CD4-positive, alpha-beta T cell (primary cell): ENCODE measurements at regions of chr1 and their contacts with region 1.

Region 1: DNA sequence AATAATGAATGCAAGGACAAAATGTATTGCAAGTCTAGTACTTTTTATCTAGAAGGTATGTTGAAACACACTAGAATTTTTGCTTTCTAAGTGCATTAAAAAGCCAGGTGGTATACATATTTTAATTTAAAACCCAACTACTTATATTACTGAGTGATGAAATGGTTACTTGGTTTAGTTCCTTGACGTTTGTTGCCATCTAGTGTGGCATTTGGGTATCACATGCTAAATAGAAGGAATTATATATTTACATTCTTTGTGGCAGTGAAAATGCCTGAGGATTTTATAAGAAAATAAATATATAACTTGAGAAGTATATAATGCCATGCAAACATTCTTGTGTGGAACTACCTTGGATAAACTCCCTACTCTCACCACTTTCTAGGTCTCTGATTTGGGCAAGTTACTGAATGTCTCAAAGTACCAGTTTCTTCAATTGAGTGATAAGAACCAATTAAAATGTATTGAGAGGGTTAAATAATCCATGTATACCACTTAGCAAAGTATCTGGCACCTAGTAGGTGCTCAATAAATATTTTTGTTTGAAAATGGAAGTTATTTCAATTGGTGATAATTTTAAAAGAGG is 69.6 kb downstream of the SDCCAG8 start:
- DNase-seq: peak in 4 of 14 experiments; percentile 43 to 72 (median 62)
- ATAC-seq: peak; percentile 55
- H3K4me3 ChIP-seq: no peak overlapping the region
- H3K4me3 Mint-ChIP-seq: no peak overlapping the region
- H3K27ac ChIP-seq: no peak overlapping the region
- H3K27ac Mint-ChIP-seq: no peak overlapping the region
- H3K4me1 ChIP-seq: no peaks in the 10 kb centered on the region
- H3K4me1 Mint-ChIP-seq: no peaks in the 10 kb centered on the region
- H3K27me3 ChIP-seq: no peaks in the 10 kb centered on the region
- H3K27me3 Mint-ChIP-seq: no peaks in the 10 kb centered on the region
- CTCF ChIP-seq: peak; percentile 88

Region 2: DNA sequence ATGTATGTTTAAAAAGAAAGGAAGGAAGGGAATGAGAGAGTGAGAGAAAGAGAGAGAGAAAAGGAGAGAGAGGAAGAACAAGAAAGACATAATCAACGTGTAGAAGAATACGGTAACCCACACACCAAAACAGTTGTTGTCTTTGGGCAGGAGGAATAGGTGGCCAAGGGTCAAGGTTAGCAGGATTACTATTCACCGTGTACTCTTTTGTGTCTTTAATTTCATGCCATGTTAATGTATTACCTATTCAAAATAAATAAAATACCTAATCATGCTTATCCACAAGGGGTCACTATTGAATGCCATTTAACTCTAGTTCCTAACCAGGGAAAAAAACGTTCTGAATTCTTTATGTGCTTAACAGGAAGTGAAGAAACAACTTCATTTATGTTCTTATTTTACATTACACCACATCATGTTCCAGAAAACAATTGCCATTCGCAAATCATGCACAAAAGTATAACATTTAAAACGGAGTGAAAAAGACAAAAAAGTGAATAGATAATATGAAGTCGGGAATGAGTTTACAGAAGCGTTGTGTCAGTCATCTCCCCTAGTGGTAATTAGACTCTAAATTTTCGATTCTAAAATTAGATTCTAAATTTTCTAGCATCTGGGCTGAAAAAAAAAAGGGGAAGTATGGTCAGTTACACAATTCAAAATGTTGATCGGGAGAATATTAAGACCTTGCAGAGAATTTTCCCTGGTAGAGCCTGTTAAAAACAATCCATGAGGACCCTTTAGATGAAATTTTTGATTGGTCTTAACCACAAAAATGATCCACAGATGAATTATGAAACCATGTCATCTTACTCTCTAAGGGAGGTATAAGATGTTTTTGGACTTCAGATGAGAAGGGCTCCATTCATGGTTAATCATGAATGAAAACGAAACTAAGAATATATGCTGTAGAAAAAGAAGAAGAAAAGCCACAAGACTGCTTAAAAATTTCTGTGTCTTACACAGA is 1793.9 kb before region 1 on chr1:
- CTCF ChIA-PET with region 1: no interaction called
- POLR2A ChIA-PET with region 1: no interaction called
- intact Hi-C with region 1: loop called (anchors 5 to 10 kb)
- DNase-seq: peak in 3 of 14 experiments; percentile 78 to 81 (median 78)
- ATAC-seq: peak; percentile 89
- H3K4me3 ChIP-seq: peak overlapping the region; percentile 59
- H3K4me3 Mint-ChIP-seq: peak overlapping the region; percentile 97
- H3K27ac ChIP-seq: no peak overlapping the region
- H3K27ac Mint-ChIP-seq: peak overlapping the region; percentile 42
- H3K4me1 ChIP-seq: peaks cover 2% of the 10 kb centered on the region
- H3K4me1 Mint-ChIP-seq: peaks cover 6% of the 10 kb centered on the region
- H3K27me3 ChIP-seq: no peaks in the 10 kb centered on the region
- H3K27me3 Mint-ChIP-seq: no peaks in the 10 kb centered on the region
- CTCF ChIP-seq: peak; percentile 74

Region 3: DNA sequence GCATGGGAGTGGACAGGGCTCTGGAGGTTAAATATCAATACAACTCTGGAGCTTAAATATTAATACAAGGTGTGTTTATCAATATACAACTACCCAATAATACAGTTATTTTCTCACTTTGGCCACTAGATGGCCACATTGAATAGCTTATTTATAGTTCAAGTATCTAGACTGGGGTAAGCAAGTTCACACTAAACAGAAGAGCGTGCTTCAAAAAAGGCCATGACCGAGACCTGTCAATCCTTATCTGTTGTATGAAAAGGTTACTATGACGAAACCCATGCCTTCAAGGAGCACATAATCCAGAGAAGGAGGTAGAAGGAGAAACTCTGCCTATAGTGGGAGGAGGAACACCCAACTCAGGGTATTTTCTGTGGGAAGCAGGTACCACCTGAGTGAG is 1714.3 kb before region 1 on chr1:
- CTCF ChIA-PET with region 1: no interaction called
- POLR2A ChIA-PET with region 1: no interaction called
- intact Hi-C with region 1: loop called (anchors 5 kb)
- DNase-seq: peak in 5 of 14 experiments; percentile 5 to 76 (median 68)
- ATAC-seq: peak; percentile 93
- H3K4me3 ChIP-seq: no peak overlapping the region
- H3K4me3 Mint-ChIP-seq: no peak overlapping the region
- H3K27ac ChIP-seq: no peak overlapping the region
- H3K27ac Mint-ChIP-seq: no peak overlapping the region
- H3K4me1 ChIP-seq: no peaks in the 10 kb centered on the region
- H3K4me1 Mint-ChIP-seq: no peaks in the 10 kb centered on the region
- H3K27me3 ChIP-seq: no peaks in the 10 kb centered on the region
- H3K27me3 Mint-ChIP-seq: no peaks in the 10 kb centered on the region
- CTCF ChIP-seq: peak; percentile 85

Region 4: GRCh38 chr1:242017584-242018233 is 1307.7 kb before region 1 on chr1:
- CTCF ChIA-PET with region 1: no interaction called
- POLR2A ChIA-PET with region 1: no interaction called
- intact Hi-C with region 1: loop called (anchors 5 to 10 kb)
- DNase-seq: peak in 9 of 14 experiments; percentile 3 to 57 (median 15)
- ATAC-seq: no peak
- H3K4me3 ChIP-seq: no peak overlapping the region
- H3K4me3 Mint-ChIP-seq: no peak overlapping the region
- H3K27ac ChIP-seq: no peak overlapping the region
- H3K27ac Mint-ChIP-seq: no peak overlapping the region
- H3K4me1 ChIP-seq: no peaks in the 10 kb centered on the region
- H3K4me1 Mint-ChIP-seq: no peaks in the 10 kb centered on the region
- H3K27me3 ChIP-seq: no peaks in the 10 kb centered on the region
- H3K27me3 Mint-ChIP-seq: no peaks in the 10 kb centered on the region
- CTCF ChIP-seq: peak; percentile 60

Region 5: DNA sequence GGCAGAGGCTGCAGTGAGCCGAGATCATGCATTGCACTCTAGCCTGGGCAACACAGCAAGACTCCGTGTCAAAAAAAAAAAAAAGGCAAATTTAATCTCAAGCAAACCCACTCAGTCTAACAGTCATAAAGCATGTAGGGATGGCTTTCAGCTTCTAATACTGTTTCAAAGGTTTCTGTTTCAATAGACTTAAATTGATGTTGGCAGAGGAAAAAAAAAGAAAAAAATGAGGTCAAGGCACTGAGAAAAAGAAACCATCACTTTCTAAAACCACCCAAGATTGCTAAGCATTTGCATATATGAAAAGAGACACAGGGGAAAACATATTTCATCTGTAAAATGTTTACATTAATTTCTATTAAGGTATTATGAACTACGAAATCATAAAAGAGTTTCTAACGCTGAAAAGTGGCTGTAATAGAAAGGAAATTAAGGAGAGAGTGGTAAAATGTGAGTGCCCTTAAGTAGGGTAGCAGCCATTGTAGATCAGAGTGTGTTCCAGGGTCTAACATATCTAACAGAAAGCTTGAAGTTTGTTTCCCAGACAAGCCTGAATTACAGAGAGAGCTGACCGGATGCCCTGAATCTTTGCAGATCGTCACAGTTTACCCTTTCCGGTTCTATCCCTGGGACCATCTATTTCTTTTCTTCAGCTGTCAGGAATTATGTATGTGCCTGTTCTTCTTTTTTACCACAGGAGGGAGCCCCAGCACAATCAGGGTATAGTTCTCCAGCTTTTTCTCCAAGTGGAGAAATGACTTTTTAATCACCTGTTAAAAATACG is 870.9 kb before region 1 on chr1:
- CTCF ChIA-PET with region 1: no interaction called
- POLR2A ChIA-PET with region 1: no interaction called
- intact Hi-C with region 1: loop called in 1 of 2 experiments (anchors 5 kb)
- DNase-seq: peak in 1 of 14 experiments; percentile 6
- ATAC-seq: no peak
- H3K4me3 ChIP-seq: no peak overlapping the region
- H3K4me3 Mint-ChIP-seq: no peak overlapping the region
- H3K27ac ChIP-seq: no peak overlapping the region
- H3K27ac Mint-ChIP-seq: no peak overlapping the region
- H3K4me1 ChIP-seq: no peaks in the 10 kb centered on the region
- H3K4me1 Mint-ChIP-seq: no peaks in the 10 kb centered on the region
- H3K27me3 ChIP-seq: peaks cover 0 to 2% of the 10 kb centered on the region in 2 experiments
- H3K27me3 Mint-ChIP-seq: peaks cover 47% of the 10 kb centered on the region
- CTCF ChIP-seq: peak; percentile 40